Gastrocnemius medialis (tissue), 4 donors: ENCODE measurements at regions of chr6 and their contacts with region 1.

Region 1: GRCh38 chr6:125314019-125314581 is 12.3 kb upstream of the HDDC2 start:
- DNase-seq: peak; percentile 36 to 54
- ATAC-seq: peak; percentile 79 to 80
- H3K4me3 ChIP-seq: no peak overlapping the region
- H3K27ac ChIP-seq: peak overlapping the region in 2 of 4 donors; percentile 45 to 48
- H3K4me1 ChIP-seq: no peaks in the 10 kb centered on the region
- H3K27me3 ChIP-seq: no peaks in the 10 kb centered on the region
- CTCF ChIP-seq: peak; percentile 62 to 82 (median 73)
- POLR2A ChIP-seq: no peak

Region 2: GRCh38 chr6:125598422-125598821 is 284.3 kb after region 1 on chr6:
- in situ Hi-C with region 1: no loop called
- intact Hi-C with region 1: loop called (anchors 5 kb)
- DNase-seq: peak; percentile 83 to 95
- ATAC-seq: peak; percentile 97 to 98
- H3K4me3 ChIP-seq: peak overlapping the region in 3 of 4 donors; percentile 20 to 39 (median 30)
- H3K27ac ChIP-seq: peak overlapping the region; percentile 84 to 95 (median 90)
- H3K4me1 ChIP-seq: peaks cover 29 to 30% of the 10 kb centered on the region in 2 donors
- H3K27me3 ChIP-seq: no peaks in the 10 kb centered on the region
- CTCF ChIP-seq: no peak
- POLR2A ChIP-seq: peak in 1 of 2 donors; percentile 21

Region 3: GRCh38 chr6:125759184-125759902 is 445.2 kb after region 1 on chr6:
- in situ Hi-C with region 1: loop called in 2 of 4 experiments (anchors 5 kb)
- intact Hi-C with region 1: no loop called
- DNase-seq: no peak
- ATAC-seq: no peak
- H3K4me3 ChIP-seq: no peak overlapping the region
- H3K27ac ChIP-seq: peak overlapping the region in 1 of 4 donors; percentile 35
- H3K4me1 ChIP-seq: peaks cover 0 to 4% of the 10 kb centered on the region in 2 donors
- H3K27me3 ChIP-seq: no peaks in the 10 kb centered on the region
- CTCF ChIP-seq: no peak
- POLR2A ChIP-seq: no peak

Region 4: DNA sequence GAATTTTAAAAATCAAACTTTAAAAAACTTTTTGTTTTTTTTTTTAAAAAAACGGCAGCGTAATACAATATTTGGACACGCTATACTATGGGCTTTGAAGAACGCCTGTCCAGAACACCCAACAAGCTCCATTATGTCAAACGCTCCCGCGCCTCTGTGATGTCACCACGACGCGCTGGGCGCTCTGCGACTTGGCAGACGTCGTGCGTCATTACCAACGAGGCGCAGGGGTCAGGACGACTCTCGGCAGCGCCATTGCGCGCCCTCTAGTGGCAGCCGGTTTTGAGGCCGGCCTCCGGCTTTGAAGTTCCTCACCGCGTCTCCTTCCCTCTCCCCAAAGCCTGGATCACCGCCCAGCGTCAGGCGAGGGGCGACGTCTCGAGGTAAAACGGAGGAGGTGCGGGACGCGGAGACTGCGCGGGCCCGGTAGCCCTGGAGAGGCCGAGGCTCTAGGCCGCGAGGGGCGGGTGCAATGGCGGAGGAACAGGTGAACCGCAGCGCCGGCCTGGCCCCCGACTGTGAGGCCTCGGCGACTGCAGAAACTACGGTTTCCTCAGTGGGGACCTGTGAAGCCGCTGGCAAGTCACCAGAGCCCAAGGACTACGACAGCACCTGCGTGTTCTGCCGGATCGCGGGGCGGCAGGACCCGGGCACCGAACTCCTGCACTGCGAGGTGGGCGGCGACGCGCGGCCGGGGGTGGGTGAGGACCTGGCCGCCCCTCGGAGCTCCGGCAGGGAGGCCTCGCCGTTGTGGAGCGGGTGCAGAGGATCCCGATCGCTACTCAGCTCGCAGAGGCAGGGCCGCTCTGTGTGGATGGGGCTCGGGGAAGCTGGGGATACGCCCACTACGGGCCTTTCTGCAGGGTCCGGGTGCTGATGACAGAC is 642.6 kb after region 1 on chr6 and contains the start of gene HINT3:
- in situ Hi-C with region 1: loop called in 1 of 4 experiments (anchors 25 kb)
- intact Hi-C with region 1: loop called (anchors 1 kb)
- DNase-seq: peak; percentile 93 to 94
- ATAC-seq: peak; percentile 93 to 98
- H3K4me3 ChIP-seq: peak within 1 kb of the TSS; percentile 62 to 97 (median 82)
- H3K27ac ChIP-seq: peak within 1 kb of the TSS; percentile 83 to 95 (median 92)
- H3K4me1 ChIP-seq: peaks cover 10 to 20% of the 10 kb centered on the region in 2 donors
- H3K27me3 ChIP-seq: no peaks in the 10 kb centered on the region
- CTCF ChIP-seq: peak; percentile 97 to 99 (median 98)
- POLR2A ChIP-seq: peak; percentile 59 to 62
- total RNA-seq, gene HINT3: 54.3 to 81.5 (median 67.5) TPM